Dendritic cell treated with granulocyte-macrophage colony-stimulating factor and Interleukin-4, amounts not matched to agents 40 ng/mL and 50 ng/mL, for 4 days (primary cell): ENCODE measurements at regions of chr13 and their contacts with region 1.

Region 1: DNA sequence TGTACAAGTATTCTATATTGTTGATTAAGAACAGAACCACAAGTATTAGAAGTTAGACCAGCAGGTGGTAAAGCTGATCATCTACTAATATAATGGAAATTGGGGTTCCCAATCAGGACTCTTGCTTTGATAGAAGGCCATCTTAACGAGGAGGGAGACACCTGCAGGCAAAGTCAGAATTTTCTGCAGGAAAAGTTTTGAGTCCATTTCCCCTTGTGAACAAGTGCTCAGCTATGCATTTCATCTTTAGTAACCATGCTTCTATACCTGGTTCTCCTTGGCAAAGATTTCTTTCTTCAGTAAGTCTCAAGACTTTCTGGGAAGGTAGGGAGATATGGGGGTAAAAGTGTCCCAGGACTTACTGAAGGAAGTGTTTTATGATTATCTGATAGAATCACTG is 36.1 kb upstream of the USPL1 start:
- H3K4me3 Mint-ChIP-seq: no peak overlapping the region
- H3K27ac Mint-ChIP-seq: no peak overlapping the region
- H3K4me1 Mint-ChIP-seq: peaks cover 29% of the 10 kb centered on the region
- H3K27me3 Mint-ChIP-seq: peaks cover 10% of the 10 kb centered on the region

Region 2: DNA sequence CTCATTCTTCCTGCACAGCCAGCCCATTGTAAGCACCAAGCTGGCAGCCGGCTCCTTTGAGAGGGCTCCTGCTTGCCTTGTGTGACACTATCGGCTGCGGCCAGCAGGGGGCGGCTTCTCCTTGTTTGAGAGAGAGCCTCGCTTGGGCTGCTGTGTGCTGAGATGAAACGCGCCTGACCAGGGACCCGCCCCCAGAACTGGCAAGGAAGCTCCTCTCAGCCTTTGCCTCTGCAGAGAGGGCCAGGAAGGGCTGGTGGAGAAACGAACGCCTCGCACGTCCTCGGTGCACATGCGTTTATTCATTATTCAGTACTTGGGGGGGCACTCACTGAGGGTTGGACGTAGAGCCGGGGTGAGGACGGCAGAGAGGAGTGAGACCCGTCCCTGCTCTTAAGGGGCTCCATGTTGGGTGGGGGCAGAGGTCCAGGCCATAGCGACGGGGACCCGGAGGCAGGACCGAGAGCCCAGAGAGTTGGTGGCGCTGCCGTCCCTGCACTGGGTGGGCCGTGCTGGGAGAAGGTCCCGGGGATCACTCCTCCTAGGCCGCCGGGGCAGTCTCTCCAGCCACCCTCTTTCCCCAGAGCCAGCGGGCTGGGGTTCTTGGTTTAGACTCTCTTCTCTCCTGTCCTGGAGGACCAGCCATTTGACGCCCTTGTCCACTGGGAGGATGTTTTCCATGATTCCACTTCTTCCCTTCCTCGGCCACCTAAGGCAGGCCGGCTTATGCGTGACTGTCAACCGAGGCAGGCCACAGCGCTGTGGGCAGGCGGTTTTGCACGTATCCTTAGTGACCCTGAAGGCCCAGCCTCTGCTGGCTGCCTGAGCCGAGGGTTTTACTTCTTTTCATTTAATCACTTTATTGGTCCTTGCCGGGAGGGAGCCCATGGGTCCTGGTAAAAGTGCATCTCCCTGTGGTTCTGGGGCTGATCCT is 448.7 kb before region 1 on chr13:
- intact Hi-C with region 1: loop called (anchors 1 kb)
- H3K4me3 Mint-ChIP-seq: no peak overlapping the region
- H3K27ac Mint-ChIP-seq: no peak overlapping the region
- H3K4me1 Mint-ChIP-seq: peaks cover 6% of the 10 kb centered on the region
- H3K27me3 Mint-ChIP-seq: no peaks in the 10 kb centered on the region

Region 3: DNA sequence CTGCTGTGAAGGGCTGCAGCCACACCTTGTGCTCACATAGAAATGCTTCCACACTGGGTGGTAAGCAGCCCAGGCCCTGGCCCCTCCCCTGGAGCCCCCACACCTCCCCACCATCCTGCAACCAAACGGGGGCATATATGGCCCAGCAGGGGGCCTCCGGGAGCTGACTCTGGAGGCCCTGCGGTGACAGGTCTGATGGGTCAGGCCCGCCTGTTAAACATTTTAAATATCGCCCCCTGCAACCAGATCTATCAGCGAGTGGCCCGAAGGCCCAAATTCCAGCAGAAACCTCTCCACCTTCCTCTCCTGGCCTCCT is 226.2 kb before region 1 on chr13:
- intact Hi-C with region 1: loop called (anchors 10 kb)
- H3K4me3 Mint-ChIP-seq: no peak overlapping the region
- H3K27ac Mint-ChIP-seq: no peak overlapping the region
- H3K4me1 Mint-ChIP-seq: peaks cover 26% of the 10 kb centered on the region
- H3K27me3 Mint-ChIP-seq: no peaks in the 10 kb centered on the region

Region 4: DNA sequence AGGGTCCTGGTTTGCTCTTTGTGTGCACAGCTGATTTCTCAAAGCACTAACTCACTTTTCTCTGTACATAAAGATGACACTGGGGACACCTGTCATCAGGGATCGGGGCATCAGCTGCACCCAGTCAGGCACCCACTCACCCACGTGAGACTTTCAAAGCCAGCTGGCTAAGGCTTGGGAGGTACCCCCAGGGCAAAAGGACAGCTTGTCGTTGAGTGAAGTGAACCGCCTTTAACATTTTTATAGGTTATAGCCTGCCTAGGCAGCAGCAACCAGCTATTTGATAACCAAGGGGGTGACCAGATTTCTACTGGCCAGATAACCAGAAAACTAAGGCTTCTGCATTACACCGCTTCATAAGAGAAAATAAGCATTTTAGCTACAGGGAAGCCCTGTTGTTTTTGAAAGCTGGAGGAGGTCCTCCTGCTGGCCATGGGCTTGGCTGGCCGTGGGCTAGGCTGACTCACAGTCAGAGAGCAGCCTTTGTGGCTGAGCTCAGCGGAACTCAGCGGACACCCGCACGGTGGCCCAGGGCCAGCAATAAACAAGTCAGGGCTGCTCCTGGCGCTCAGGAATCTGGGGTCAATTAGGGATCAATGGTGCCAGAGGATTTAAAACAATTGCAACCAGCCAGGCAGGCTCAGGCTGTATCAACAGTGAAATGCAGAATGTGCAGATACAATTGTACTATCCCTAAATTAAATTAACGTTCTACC is 210.9 kb after region 1 on chr13:
- intact Hi-C with region 1: no loop called
- H3K4me3 Mint-ChIP-seq: no peak overlapping the region
- H3K27ac Mint-ChIP-seq: no peak overlapping the region
- H3K4me1 Mint-ChIP-seq: peaks cover 32% of the 10 kb centered on the region
- H3K27me3 Mint-ChIP-seq: peaks cover 38% of the 10 kb centered on the region

Region 5: GRCh38 chr13:30847650-30848307 is 266.2 kb after region 1 on chr13:
- intact Hi-C with region 1: no loop called
- H3K4me3 Mint-ChIP-seq: no peak overlapping the region
- H3K27ac Mint-ChIP-seq: no peak overlapping the region
- H3K4me1 Mint-ChIP-seq: peaks cover 12% of the 10 kb centered on the region
- H3K27me3 Mint-ChIP-seq: peaks cover 20% of the 10 kb centered on the region

Region 6: GRCh38 chr13:30915691-30916541 is 334.3 kb after region 1 on chr13:
- intact Hi-C with region 1: no loop called
- H3K4me3 Mint-ChIP-seq: no peak overlapping the region
- H3K27ac Mint-ChIP-seq: no peak overlapping the region
- H3K4me1 Mint-ChIP-seq: no peaks in the 10 kb centered on the region
- H3K27me3 Mint-ChIP-seq: peaks cover 20% of the 10 kb centered on the region